ENCODE measurements at regions of chr4 and their contacts with region 1.

Region 1: DNA sequence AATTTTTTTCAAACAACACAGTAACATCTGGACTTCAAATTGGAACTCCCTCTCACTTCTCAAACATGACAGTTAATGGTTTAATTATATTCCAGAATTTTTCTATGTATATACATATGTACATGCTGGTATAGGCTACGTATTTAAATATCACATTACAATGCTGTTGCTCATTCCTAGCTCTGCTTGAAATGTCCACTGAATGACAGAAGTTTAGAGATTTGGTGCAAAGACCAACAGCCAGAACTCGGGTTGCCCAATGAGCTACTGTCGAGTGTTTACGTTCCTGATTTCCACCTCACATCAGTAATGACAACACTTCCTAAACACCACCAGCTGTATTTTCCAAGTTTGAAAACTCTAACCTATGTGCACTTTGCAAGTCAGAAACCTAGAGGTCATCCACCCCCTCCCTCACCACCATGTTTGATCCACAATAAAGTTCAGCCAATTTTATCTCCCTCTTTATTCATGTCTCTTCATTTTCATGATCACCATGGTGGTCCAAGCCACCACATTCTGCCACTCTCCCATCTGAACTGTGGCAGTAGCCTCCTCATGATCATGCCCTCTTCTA is 49.3 kb upstream of the RPL34 start:
- DNase-seq: no peak
- ATAC-seq: no peak
- H3K4me3 Mint-ChIP-seq: no peak overlapping the region
- H3K27ac Mint-ChIP-seq: no peak overlapping the region
- H3K4me1 Mint-ChIP-seq: peaks cover 20% of the 10 kb centered on the region
- H3K27me3 Mint-ChIP-seq: no peaks in the 10 kb centered on the region

Region 2: DNA sequence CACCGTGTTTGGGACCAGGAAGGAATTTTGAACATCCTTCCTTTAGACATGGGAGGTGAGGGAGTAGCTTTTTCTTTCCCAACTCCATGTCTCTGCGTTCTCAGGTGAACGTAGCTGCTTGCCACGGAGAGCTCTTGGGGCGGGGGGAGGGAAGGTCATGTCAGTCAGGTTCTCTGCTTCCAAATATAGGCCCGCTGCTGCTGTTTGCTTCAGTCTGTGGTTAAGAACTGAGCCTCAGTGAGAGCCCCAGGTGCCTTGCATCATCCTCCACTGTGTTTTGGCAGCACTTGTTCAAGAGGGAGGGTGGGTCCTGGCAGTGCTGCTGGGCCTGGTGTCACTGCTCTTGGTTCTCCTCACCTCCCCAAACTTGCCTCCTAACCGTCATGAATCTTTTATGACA is 534.9 kb before region 1 on chr4:
- CTCF ChIA-PET with region 1: interaction called, 60 read pairs
- POLR2A ChIA-PET with region 1: no interaction called
- DNase-seq: peak; percentile 84
- ATAC-seq: peak; percentile 92
- H3K4me3 Mint-ChIP-seq: peak overlapping the region; percentile 62
- H3K27ac Mint-ChIP-seq: peak overlapping the region; percentile 96
- H3K4me1 Mint-ChIP-seq: peaks cover 55% of the 10 kb centered on the region
- H3K27me3 Mint-ChIP-seq: no peaks in the 10 kb centered on the region

Region 3: DNA sequence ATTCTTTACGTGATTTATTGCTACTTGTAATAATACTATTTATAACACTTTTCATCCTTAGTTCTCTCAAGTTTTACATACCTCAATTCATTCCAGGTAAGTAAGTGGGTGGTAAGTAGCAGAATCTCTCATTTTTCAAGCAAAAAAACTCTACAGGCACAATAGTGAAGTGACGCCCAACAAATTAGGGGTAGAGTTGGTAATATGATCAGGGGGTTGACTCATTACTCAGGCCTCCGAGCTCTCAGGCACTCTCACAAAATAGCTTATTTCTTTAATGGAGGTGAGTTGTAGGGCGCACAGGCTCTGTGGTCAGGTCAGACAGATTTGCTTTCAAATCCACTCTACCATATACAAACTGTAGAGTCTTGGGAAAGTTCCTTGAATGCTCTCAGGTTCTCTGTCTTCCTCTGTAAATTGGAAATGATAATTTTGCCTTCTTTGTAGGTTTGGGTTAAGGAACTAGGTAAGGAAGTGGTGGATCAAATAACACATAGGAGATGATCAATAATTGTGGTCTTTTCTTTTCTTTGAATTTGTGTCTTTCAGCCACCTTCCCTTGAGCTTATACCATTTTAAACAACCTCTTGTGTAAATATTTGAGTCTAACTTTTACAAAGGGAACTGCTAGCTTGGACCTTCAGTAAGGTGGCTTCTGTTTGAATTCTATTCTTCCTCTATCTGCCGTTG is 267.4 kb before region 1 on chr4:
- CTCF ChIA-PET with region 1: no interaction called
- POLR2A ChIA-PET with region 1: no interaction called
- DNase-seq: no peak
- ATAC-seq: no peak
- H3K4me3 Mint-ChIP-seq: no peak overlapping the region
- H3K27ac Mint-ChIP-seq: no peak overlapping the region
- H3K4me1 Mint-ChIP-seq: peaks cover 25% of the 10 kb centered on the region
- H3K27me3 Mint-ChIP-seq: no peaks in the 10 kb centered on the region

Region 4: GRCh38 chr4:108466936-108467902 is 103.9 kb before region 1 on chr4:
- CTCF ChIA-PET with region 1: interaction called, 10 read pairs
- POLR2A ChIA-PET with region 1: no interaction called
- DNase-seq: peak; percentile 57
- ATAC-seq: peak; percentile 89
- H3K4me3 Mint-ChIP-seq: peak overlapping the region; percentile 69
- H3K27ac Mint-ChIP-seq: peak overlapping the region; percentile 94
- H3K4me1 Mint-ChIP-seq: peaks cover 38% of the 10 kb centered on the region
- H3K27me3 Mint-ChIP-seq: no peaks in the 10 kb centered on the region

Region 5: DNA sequence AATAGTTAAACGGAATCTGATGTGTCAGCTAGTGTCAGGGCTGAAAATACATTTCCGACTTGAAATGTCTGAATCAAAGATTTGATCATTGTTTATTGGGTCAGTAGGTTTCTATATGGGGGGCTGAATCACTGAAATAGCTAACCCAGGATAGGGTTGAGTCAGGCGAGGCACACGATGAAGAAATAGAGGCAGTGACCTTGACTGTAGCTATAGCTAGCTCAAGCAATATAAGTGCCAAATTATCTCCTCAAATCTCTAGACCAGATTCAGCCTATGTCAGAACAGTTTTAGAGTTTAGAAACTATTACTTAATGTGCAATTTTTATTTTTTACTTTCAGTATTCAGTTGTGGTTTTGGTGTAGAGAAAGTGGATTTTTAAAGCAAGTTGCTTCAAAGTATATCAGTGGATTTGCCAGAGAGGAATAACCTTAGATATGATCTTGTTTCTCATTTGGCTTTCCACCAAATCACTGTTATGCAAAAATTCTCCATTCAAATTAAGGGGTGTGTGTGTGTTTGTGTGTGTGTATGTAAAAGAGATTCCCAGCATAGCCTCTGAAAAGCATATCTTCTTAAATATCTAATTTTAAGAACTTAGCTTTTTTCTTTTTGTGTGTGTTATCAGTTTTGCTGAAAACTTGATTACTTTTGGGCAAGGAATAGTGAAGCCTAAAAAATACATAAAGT is 51.0 kb before region 1 on chr4:
- CTCF ChIA-PET with region 1: interaction called, 13 read pairs
- POLR2A ChIA-PET with region 1: no interaction called
- DNase-seq: no peak
- ATAC-seq: peak; percentile 30
- H3K4me3 Mint-ChIP-seq: no peak overlapping the region
- H3K27ac Mint-ChIP-seq: no peak overlapping the region
- H3K4me1 Mint-ChIP-seq: peaks cover 21% of the 10 kb centered on the region
- H3K27me3 Mint-ChIP-seq: no peaks in the 10 kb centered on the region

Region 6: DNA sequence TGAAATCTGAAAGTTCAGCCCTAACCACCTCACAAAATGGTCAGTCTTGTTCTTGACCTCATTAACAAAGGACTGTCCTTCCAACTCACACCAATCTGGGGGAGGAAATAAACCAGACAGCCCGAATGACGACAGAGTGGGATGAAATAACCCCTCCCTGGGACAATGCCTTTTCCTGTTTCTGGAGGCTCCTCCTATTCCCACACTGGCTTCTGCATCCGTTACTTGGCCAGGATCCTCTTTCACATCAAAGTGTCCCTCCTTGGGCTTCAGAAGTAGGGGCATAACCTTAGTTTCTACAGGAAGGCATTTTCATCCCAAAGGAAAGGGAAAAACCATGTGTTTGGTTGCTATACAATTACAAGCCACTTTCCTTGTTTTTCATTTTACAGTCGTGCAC is 10.5 kb before region 1 on chr4:
- CTCF ChIA-PET with region 1: interaction called, 14 read pairs
- POLR2A ChIA-PET with region 1: no interaction called
- DNase-seq: no peak
- ATAC-seq: no peak
- H3K4me3 Mint-ChIP-seq: no peak overlapping the region
- H3K27ac Mint-ChIP-seq: no peak overlapping the region
- H3K4me1 Mint-ChIP-seq: peaks cover 4% of the 10 kb centered on the region
- H3K27me3 Mint-ChIP-seq: no peaks in the 10 kb centered on the region

Measured in activated CD8-positive, alpha-beta T cell treated with anti-CD3 and anti-CD28 coated beads, Interleukin-2, amount 10 ng/mL, durations not matched to agents 7 days and 5 days (primary cell).